CD8-positive, alpha-beta T cell (primary cell): ENCODE measurements at regions of chr1 and their contacts with region 1.

Region 1: DNA sequence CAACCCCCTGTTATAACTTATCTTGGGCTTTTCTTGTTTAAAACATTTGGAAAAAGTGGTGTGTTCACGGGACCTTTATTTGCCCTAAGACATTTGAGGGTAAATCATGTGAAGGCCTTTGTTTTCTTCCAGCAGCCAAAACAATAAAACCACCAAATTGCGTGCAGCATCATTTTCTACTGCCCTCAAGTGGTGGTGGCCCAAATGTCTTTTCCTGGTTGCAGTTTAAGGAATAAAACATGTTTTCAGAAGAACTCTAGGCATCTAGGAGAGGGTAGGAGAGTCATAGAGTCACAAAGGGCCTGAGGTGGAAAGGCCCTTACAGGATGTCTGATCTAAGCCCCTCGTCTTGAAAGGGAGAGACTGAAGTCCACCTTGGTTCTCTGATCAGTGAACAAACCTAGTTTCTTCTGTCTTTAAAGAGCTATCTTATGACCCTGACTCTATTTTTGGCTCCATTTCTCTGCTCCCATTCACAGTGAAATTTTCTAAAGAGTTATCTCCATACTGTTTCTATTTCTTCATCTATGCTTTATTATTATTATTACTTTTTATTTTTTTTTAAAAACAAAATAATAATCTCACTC is 16.0 kb upstream of the EPS15 start:
- DNase-seq: peak; percentile 8 to 72 (median 38)
- ATAC-seq: peak; percentile 57
- H3K4me3 ChIP-seq: no peak overlapping the region
- H3K4me3 Mint-ChIP-seq: no peak overlapping the region
- H3K27ac ChIP-seq: no peak overlapping the region
- H3K27ac Mint-ChIP-seq: peak overlapping the region; percentile 62
- H3K4me1 ChIP-seq: peaks cover 7% of the 10 kb centered on the region
- H3K4me1 Mint-ChIP-seq: peaks cover 10% of the 10 kb centered on the region
- H3K27me3 ChIP-seq: no peaks in the 10 kb centered on the region
- H3K27me3 Mint-ChIP-seq: no peaks in the 10 kb centered on the region
- CTCF ChIP-seq: peak; percentile 62

Region 2: DNA sequence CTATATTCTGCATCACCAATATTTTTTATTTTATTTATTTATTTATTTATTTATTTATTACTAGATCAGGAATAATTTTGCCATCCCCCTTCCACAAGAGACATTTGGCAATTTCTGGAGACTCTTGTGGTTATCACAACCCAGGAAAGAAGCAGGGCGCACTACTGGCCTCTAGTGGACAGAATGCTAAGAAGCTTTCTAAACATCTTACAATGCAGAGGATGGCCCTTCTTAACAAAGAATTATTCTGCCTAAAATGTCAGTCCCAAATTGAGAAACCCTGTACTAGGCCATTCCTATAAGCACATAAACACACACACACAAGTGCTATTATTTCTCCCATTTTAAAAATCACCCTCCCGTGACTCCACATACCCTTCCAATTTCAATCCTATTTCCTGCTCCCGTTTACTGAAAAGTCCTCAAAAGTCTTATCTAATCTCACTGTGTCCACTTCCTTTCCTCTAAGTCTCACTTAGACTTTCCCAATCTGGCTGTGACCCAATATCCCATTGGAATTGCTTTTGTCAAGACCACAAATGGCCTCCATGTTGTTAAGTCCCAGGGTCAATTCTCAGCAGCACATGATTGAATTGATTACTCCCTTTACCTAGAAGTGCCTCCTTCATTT is 342.8 kb before region 1 on chr1:
- CTCF ChIA-PET with region 1: no interaction called
- POLR2A ChIA-PET with region 1: no interaction called
- intact Hi-C with region 1: no loop called
- DNase-seq: peak in 8 of 9 experiments; percentile 24 to 67 (median 56)
- ATAC-seq: no peak
- H3K4me3 ChIP-seq: no peak overlapping the region
- H3K4me3 Mint-ChIP-seq: no peak overlapping the region
- H3K27ac ChIP-seq: no peak overlapping the region
- H3K27ac Mint-ChIP-seq: no peak overlapping the region
- H3K4me1 ChIP-seq: no peaks in the 10 kb centered on the region
- H3K4me1 Mint-ChIP-seq: no peaks in the 10 kb centered on the region
- H3K27me3 ChIP-seq: no peaks in the 10 kb centered on the region
- H3K27me3 Mint-ChIP-seq: peaks cover 6% of the 10 kb centered on the region
- CTCF ChIP-seq: peak; percentile 82

Region 3: DNA sequence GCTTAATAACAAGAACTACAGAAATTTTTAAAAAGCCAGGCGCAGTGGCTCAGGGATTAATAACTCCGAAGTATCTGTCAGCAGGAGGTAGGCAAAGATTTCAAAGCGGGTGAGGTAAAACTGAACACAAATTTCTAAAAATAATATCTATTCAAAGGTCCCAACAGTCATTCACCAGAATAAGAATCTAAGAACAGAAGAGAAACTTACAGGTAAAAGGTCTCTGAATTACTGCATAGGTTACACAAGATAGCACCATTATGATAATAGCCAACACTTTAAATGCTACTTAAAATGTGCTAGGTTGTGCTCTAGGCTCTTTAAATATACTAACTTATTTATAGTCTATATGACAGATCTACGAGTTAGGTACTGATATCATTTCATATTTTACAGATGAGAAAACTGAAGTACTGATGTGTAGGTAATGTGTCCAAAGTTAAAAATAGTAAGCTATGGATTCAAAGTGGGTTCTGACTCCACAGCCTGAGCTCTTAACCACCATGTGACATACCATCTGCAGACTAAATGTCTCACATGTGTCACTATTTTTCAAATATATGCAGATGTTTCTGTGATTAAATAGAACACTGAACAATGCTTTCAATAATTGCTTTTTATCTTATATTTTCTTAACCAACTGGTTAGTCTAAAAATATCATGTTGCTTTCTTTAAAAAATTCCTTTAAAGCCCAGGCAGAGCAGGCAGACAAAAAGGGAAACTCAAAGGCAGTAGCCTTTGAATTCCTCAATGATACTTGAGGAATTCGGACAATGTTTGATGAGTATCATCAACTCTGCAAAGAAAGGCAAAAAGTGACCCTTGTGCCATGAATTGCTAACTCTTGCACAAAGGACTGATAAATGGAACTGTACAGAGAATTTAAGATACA is 124.3 kb before region 1 on chr1:
- CTCF ChIA-PET with region 1: no interaction called
- POLR2A ChIA-PET with region 1: no interaction called
- intact Hi-C with region 1: loop called in 1 of 2 experiments (anchors 10 kb)
- DNase-seq: no peak
- ATAC-seq: no peak
- H3K4me3 ChIP-seq: no peak overlapping the region
- H3K4me3 Mint-ChIP-seq: no peak overlapping the region
- H3K27ac ChIP-seq: no peak overlapping the region
- H3K27ac Mint-ChIP-seq: no peak overlapping the region
- H3K4me1 ChIP-seq: no peaks in the 10 kb centered on the region
- H3K4me1 Mint-ChIP-seq: no peaks in the 10 kb centered on the region
- H3K27me3 ChIP-seq: no peaks in the 10 kb centered on the region
- H3K27me3 Mint-ChIP-seq: no peaks in the 10 kb centered on the region
- CTCF ChIP-seq: no peak

Region 4: GRCh38 chr1:51453010-51453409 is 82.1 kb before region 1 on chr1:
- CTCF ChIA-PET with region 1: interaction called, 3 read pairs
- POLR2A ChIA-PET with region 1: no interaction called
- intact Hi-C with region 1: loop called (anchors 5 kb)
- DNase-seq: no peak
- ATAC-seq: no peak
- H3K4me3 ChIP-seq: no peak overlapping the region
- H3K4me3 Mint-ChIP-seq: no peak overlapping the region
- H3K27ac ChIP-seq: no peak overlapping the region
- H3K27ac Mint-ChIP-seq: no peak overlapping the region
- H3K4me1 ChIP-seq: no peaks in the 10 kb centered on the region
- H3K4me1 Mint-ChIP-seq: peaks cover 1% of the 10 kb centered on the region
- H3K27me3 ChIP-seq: no peaks in the 10 kb centered on the region
- H3K27me3 Mint-ChIP-seq: no peaks in the 10 kb centered on the region
- CTCF ChIP-seq: no peak

Region 5: GRCh38 chr1:51469518-51469917 is 65.6 kb before region 1 on chr1:
- CTCF ChIA-PET with region 1: no interaction called
- POLR2A ChIA-PET with region 1: no interaction called
- intact Hi-C with region 1: loop called in 1 of 2 experiments (anchors 5 kb)
- DNase-seq: no peak
- ATAC-seq: no peak
- H3K4me3 ChIP-seq: no peak overlapping the region
- H3K4me3 Mint-ChIP-seq: no peak overlapping the region
- H3K27ac ChIP-seq: no peak overlapping the region
- H3K27ac Mint-ChIP-seq: no peak overlapping the region
- H3K4me1 ChIP-seq: no peaks in the 10 kb centered on the region
- H3K4me1 Mint-ChIP-seq: peaks cover 12% of the 10 kb centered on the region
- H3K27me3 ChIP-seq: no peaks in the 10 kb centered on the region
- H3K27me3 Mint-ChIP-seq: no peaks in the 10 kb centered on the region
- CTCF ChIP-seq: no peak

Region 6: GRCh38 chr1:51592711-51593110 is 57.6 kb after region 1 on chr1:
- CTCF ChIA-PET with region 1: no interaction called
- POLR2A ChIA-PET with region 1: no interaction called
- intact Hi-C with region 1: no loop called
- DNase-seq: no peak
- ATAC-seq: no peak
- H3K4me3 ChIP-seq: no peak overlapping the region
- H3K4me3 Mint-ChIP-seq: no peak overlapping the region
- H3K27ac ChIP-seq: no peak overlapping the region
- H3K27ac Mint-ChIP-seq: no peak overlapping the region
- H3K4me1 ChIP-seq: no peaks in the 10 kb centered on the region
- H3K4me1 Mint-ChIP-seq: no peaks in the 10 kb centered on the region
- H3K27me3 ChIP-seq: no peaks in the 10 kb centered on the region
- H3K27me3 Mint-ChIP-seq: no peaks in the 10 kb centered on the region
- CTCF ChIP-seq: no peak